Astrocyte of the cerebellum (primary cell): ENCODE measurements at regions of chr17 and their contacts with region 1.

Region 1: DNA sequence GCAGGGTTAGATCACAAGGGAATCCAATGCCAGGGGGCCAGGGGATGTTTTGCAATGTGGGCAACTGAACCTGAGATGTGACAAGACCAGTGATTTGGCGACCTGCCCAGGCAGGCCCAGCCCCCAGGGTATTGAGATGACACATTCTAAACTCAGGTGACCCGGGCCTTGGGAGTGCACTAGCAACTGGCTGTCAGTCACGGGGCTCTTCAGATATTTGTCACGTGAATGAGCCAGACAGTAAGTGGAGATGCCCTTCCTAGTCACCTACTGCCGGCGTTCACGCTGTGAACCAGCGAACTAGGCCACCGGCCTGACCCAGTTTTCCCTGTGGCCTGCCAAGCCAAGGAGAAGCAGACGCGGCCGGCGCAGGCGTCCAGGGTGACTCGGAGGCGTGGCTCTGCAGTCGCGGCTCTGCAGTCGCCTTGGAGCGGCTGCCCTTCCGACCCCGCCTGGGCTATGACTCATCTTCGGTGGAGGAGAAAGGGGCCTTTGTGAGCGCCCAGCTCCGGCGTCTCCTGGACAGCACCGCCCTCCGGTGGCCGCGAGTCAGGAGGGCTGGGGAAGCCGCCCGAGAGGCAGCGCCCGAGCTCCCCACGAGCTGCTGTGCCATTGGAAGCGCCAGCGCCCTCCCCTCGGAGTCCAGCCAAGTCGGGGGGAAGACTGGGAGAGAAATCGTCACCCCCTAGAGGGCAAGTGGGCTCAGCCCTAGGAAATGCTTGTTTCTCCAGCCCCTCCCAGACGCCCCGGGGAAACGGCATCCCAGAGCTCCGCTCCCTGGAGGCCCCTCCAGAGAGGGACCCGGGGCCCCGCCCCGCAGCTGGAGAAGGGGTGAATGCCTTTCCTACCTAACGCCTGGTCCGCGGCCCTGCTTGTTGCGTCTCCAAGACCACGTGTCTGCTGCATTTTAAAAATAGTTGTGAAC is 38.8 kb downstream of the WSB1 start:
- DNase-seq: peak; percentile 84
- H3K4me3 ChIP-seq: peak overlapping the region; percentile 44
- CTCF ChIP-seq: peak; percentile 77

Region 2: DNA sequence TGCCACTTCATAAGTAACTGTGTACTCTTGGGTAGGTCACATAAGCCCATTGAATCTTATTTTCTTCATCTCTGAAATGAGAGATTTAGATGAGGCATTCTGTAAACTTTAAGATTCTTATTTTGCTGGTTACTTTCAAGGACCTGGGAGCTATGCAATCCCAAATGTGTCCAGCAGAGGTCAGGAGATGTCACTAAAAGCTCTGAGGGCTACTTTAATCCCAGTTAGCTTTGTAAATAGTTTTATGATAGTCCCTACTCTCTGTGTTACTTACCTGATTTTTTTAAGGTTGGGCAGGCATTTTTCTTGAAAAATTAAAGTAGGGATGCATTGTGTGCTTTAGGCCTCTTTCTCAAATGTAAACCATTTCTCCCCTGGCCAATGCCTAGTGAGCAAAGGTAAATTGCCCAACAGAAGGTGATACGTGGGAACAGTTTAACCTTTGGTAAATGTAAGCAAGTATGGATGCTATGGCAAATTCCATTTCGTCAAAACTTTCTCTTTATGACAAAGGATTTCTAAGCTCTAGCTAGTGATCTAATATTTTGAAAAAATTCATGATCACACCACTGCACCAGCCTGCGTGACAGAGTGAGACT is 95.9 kb before region 1 on chr17:
- in situ Hi-C with region 1: loop called (anchors 5 kb)
- DNase-seq: peak; percentile 70
- H3K4me3 ChIP-seq: no peak overlapping the region
- CTCF ChIP-seq: peak; percentile 88

Region 3: GRCh38 chr17:27390540-27390939 is 57.8 kb after region 1 on chr17:
- in situ Hi-C with region 1: no loop called
- DNase-seq: no peak
- H3K4me3 ChIP-seq: no peak overlapping the region
- CTCF ChIP-seq: no peak

Region 4: GRCh38 chr17:27430882-27431491 is 98.2 kb after region 1 on chr17:
- in situ Hi-C with region 1: loop called (anchors 25 kb)
- DNase-seq: no peak
- H3K4me3 ChIP-seq: no peak overlapping the region
- CTCF ChIP-seq: peak; percentile 65

Region 5: GRCh38 chr17:27569257-27569722 is 236.5 kb after region 1 on chr17:
- in situ Hi-C with region 1: loop called (anchors 25 kb)
- DNase-seq: no peak
- H3K4me3 ChIP-seq: no peak overlapping the region
- CTCF ChIP-seq: peak; percentile 72